Aorta (tissue), 5 donors: ENCODE measurements at regions of chr19 and their contacts with region 1.

Region 1: GRCh38 chr19:46186101-46187100 is 38.4 kb downstream of the IGFL2 start:
- DNase-seq: no peak
- ATAC-seq: no peak
- H3K4me3 ChIP-seq: no peak overlapping the region
- H3K27ac ChIP-seq: no peak overlapping the region
- H3K4me1 ChIP-seq: no peaks in the 10 kb centered on the region
- H3K27me3 ChIP-seq: no peaks in the 10 kb centered on the region

Region 2: GRCh38 chr19:46030812-46031550 is 155.4 kb before region 1 on chr19:
- intact Hi-C with region 1: loop called in 1 of 2 experiments (anchors 5 kb)
- DNase-seq: no peak
- ATAC-seq: no peak
- H3K4me3 ChIP-seq: no peak overlapping the region
- H3K27ac ChIP-seq: no peak overlapping the region
- H3K4me1 ChIP-seq: no peaks in the 10 kb centered on the region
- H3K27me3 ChIP-seq: no peaks in the 10 kb centered on the region

Region 3: DNA sequence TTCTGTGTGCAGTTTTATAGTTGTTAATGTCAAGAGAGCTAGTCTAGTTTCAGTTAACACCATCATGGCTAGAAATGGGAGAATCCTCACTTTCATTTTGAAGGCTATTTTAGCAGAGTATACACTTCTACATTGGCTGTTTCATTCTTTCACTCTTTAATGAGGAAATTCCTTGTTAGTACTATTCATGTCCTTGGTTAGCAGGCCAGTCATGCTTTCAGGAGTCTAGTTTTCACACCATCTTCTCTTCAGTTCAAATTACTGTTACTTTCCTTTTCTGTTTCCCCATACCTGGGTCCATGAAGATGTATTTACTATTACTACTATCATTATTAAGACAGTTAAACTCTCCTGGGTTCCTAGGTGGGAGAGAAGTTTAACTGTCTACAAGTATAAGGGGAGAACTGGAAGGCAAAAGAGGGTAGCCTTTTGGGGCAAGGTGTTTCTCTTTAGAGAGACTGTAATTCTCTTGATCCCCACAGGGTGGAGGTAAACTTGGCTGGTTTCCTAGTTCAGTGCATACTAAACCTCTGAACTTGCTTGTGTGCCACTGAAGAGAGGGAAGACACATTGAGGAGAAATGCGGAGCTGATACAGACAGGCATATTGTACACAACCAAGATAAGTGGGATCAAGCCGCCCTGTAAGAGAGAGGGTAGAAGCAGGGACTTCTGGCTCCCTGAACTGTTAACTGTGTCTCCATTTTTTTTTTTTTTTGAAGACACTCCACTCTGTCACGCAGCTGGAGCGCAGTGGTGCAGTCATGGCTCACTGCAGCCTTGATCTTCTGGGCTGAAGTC is 104.3 kb before region 1 on chr19:
- intact Hi-C with region 1: loop called (anchors 2 kb)
- DNase-seq: no peak
- ATAC-seq: no peak
- H3K4me3 ChIP-seq: no peak overlapping the region
- H3K27ac ChIP-seq: no peak overlapping the region
- H3K4me1 ChIP-seq: no peaks in the 10 kb centered on the region
- H3K27me3 ChIP-seq: peaks cover 0 to 7% of the 10 kb centered on the region in 2 donors

Region 4: DNA sequence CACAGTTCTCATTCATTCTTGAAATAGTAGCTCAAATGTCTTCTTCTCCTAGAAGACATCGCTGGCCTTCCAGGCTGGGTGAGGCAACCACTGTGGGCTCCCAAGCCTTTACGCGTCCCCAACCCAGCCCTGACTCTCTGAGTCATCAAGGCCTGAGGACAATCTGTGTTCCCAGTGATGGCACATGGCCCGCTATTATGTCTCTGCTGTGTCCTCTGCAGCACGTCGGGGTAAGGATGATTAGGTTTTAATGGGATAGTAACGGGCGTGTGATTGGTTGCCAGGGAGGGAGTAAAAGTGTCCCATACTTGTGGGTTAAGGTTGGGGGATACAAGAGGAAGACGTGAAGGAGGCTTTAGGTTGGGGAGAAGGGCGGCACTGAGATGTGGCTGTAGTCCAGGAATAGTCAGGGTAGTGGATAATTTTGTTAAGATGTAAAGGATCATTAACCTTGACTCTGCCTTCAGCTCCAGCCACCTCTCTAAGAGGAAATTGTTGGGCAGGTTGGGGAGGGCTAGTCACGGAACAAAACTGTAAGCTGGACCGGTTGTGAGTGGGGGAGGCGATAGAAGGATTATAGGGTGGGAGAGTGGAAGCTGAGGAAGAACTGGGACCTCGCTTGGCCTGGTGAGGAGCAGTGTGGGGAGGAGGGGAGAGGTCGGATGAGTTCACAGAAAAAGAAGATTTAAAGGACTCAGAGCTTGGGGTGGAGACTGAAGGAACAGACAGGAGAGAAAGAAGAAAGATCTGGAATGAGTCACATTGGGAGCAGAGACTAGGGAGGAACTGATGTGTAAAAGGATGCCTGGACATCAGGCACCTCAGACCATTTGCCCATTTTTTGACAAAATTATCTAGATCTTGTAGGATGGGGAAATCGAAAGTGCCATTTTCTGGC is 15.3 kb after region 1 on chr19:
- intact Hi-C with region 1: no loop called
- DNase-seq: peak in 1 of 2 donors; percentile 8
- ATAC-seq: no peak
- H3K4me3 ChIP-seq: no peak overlapping the region
- H3K27ac ChIP-seq: no peak overlapping the region
- H3K4me1 ChIP-seq: no peaks in the 10 kb centered on the region
- H3K27me3 ChIP-seq: no peaks in the 10 kb centered on the region